Activated T-helper 2 cell treated with anti-CD3 and anti-CD28 coated beads, Interferon-gamma antibody, Interleukin-2, Interleukin-4, amounts not matched to agents 10 μg/mL and 5 μg/mL and 100 μg/mL, durations not matched to agents 14 hours and 24 hours and 36 hours (primary cell): ENCODE measurements at regions of chr15 and their contacts with region 1.

Region 1: GRCh38 chr15:70480196-70480856 is 283.0 kb downstream of the UACA start:
- DNase-seq: peak; percentile 63
- H3K4me3 Mint-ChIP-seq: peak overlapping the region; percentile 34
- H3K27ac Mint-ChIP-seq: peak overlapping the region; percentile 44
- H3K4me1 Mint-ChIP-seq: peaks cover 40% of the 10 kb centered on the region
- H3K27me3 Mint-ChIP-seq: peaks cover 55% of the 10 kb centered on the region

Region 2: GRCh38 chr15:70387081-70387480 is 93.2 kb before region 1 on chr15:
- intact Hi-C with region 1: no loop called
- DNase-seq: no peak
- H3K4me3 Mint-ChIP-seq: no peak overlapping the region
- H3K27ac Mint-ChIP-seq: no peak overlapping the region
- H3K4me1 Mint-ChIP-seq: no peaks in the 10 kb centered on the region
- H3K27me3 Mint-ChIP-seq: peaks cover 3% of the 10 kb centered on the region

Region 3: DNA sequence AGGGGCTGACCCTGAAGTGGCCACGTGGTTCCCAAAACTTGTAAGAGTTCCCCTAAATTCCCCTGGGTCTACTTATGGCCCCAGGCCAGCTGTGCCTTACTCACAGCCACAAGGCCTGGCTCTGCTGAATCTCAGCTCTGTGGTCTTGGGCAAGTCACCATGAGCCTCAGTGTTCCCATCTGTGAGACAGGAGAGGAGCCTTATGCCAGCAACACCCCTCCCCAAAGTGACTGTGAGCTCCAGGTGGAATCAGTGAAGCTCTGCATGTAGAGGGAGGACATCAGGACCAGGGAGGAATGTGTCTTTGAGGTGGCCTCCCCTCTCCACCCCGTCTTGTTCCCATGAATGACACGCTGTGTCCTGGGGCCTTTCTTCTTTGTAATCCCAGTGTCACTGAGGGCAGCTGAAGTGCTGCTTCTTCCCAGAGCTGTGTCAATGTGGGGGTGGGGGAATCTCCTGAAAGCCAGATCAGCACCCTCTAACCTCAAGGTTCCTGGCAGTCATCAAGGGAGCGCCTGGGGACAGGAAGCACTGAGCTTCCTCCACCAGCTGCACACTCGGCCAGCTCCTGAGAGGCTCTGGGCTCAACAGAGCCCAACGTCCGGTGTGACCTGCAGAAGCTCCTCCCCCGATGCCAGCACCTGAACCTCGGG is 24.1 kb after region 1 on chr15:
- intact Hi-C with region 1: loop called (anchors 1 kb)
- DNase-seq: no peak
- H3K4me3 Mint-ChIP-seq: peak overlapping the region; percentile 14
- H3K27ac Mint-ChIP-seq: peak overlapping the region; percentile 64
- H3K4me1 Mint-ChIP-seq: peaks cover 63% of the 10 kb centered on the region
- H3K27me3 Mint-ChIP-seq: peaks cover 19% of the 10 kb centered on the region